CD4-positive, alpha-beta memory T cell (primary cell): ENCODE measurements at regions of chr10 and their contacts with region 1.

Region 1: DNA sequence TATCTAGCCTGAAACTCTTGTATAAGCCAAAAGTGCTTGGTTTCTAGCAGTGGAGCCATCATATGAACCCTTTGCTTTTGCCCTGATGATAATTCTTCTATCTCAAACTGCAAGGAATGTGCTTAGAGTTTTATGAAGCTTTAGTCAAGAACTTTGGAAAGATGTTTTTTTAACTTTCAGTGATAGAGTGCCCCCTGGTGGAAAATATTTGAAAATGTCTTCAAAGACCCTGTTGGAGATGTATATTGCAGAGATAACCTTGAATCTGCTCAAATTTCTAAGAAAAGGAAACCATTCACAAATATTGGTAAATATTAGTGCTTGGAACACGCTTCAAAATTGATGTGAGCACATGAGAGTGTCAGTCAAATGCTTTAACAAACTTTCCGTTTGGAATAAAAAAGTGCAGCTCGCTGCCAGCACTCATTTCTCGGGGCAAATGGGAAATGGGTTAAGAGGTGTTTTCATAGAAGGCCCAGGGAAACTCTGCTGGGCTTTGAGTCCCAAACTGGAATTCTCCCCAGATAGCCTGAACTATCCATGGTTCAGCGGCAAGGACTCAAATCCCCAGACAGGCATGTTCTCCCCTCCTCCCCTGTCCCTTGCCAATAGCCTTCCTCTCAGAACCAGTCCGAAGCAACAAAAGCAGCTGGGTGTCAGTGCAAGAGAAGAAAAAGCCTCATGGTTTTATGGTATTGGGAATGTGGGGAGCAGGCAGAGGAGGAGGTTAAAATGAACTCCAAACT is 129.3 kb downstream of the MYOF start:
- DNase-seq: peak in 4 of 5 donors; percentile 43 to 46 (median 45)
- H3K4me3 ChIP-seq: no peak overlapping the region
- H3K4me3 Mint-ChIP-seq: no peak overlapping the region
- H3K27ac ChIP-seq: no peak overlapping the region
- H3K27ac Mint-ChIP-seq: no peak overlapping the region
- H3K4me1 ChIP-seq: no peaks in the 10 kb centered on the region
- H3K4me1 Mint-ChIP-seq: peaks cover 0 to 3% (median 0%) of the 10 kb centered on the region in 4 donors
- H3K27me3 ChIP-seq: no peaks in the 10 kb centered on the region
- H3K27me3 Mint-ChIP-seq: peaks cover 7 to 10% of the 10 kb centered on the region in 2 donors

Region 2: DNA sequence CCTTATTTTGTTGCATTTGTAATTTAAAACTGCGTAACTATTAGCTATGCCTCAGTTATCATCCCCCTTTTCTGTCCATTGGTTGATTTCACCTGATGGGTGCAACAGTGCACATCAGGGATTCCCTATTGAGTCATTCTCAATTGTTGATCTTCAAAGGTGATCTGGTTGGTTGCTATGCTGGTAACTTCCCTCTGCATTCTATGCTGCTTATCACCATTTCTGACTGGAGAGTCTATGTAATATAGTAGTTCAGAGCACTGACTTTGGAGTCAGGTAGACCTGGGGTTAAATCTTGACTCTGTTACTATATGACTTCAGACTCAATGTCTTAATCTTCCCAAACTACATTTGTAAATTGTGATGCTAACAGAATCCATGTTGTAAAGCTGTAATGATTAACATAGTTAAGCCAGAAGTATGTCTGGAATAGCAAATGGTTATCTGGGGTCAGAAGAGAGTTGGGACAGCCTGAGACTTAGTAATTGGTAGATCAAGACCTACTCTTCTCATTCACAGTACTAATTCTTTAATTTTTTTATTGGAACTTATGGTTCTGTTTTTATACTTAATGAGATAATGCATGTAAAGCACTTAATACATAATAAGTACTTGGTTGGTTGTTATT is 466.4 kb before region 1 on chr10:
- CTCF ChIA-PET with region 1: interaction called, 11 read pairs
- POLR2A ChIA-PET with region 1: no interaction called
- intact Hi-C with region 1: loop called (anchors 1 kb)
- DNase-seq: no peak
- H3K4me3 ChIP-seq: no peak overlapping the region
- H3K4me3 Mint-ChIP-seq: no peak overlapping the region
- H3K27ac ChIP-seq: no peak overlapping the region
- H3K27ac Mint-ChIP-seq: peak overlapping the region in 1 of 7 donors; percentile 81
- H3K4me1 ChIP-seq: no peaks in the 10 kb centered on the region
- H3K4me1 Mint-ChIP-seq: peaks cover 0 to 9% (median 7%) of the 10 kb centered on the region in 4 donors
- H3K27me3 ChIP-seq: no peaks in the 10 kb centered on the region
- H3K27me3 Mint-ChIP-seq: no peaks in the 10 kb centered on the region

Region 3: GRCh38 chr10:92965314-92965713 is 387.5 kb before region 1 on chr10:
- CTCF ChIA-PET with region 1: interaction called, 9 read pairs
- POLR2A ChIA-PET with region 1: no interaction called
- intact Hi-C with region 1: loop called (anchors 1 kb)
- DNase-seq: peak in 4 of 5 donors; percentile 14 to 26 (median 18)
- H3K4me3 ChIP-seq: no peak overlapping the region
- H3K4me3 Mint-ChIP-seq: no peak overlapping the region
- H3K27ac ChIP-seq: no peak overlapping the region
- H3K27ac Mint-ChIP-seq: no peak overlapping the region
- H3K4me1 ChIP-seq: no peaks in the 10 kb centered on the region
- H3K4me1 Mint-ChIP-seq: no peaks in the 10 kb centered on the region
- H3K27me3 ChIP-seq: no peaks in the 10 kb centered on the region
- H3K27me3 Mint-ChIP-seq: no peaks in the 10 kb centered on the region

Region 4: GRCh38 chr10:93080350-93081046 is 272.3 kb before region 1 on chr10:
- CTCF ChIA-PET with region 1: interaction called, 38 read pairs
- POLR2A ChIA-PET with region 1: no interaction called
- intact Hi-C with region 1: loop called (anchors 1 kb)
- DNase-seq: peak in 4 of 5 donors; percentile 43 to 47 (median 46)
- H3K4me3 ChIP-seq: no peak overlapping the region
- H3K4me3 Mint-ChIP-seq: peak overlapping the region in 4 of 8 donors; percentile 33 to 71 (median 62)
- H3K27ac ChIP-seq: no peak overlapping the region
- H3K27ac Mint-ChIP-seq: no peak overlapping the region
- H3K4me1 ChIP-seq: peaks cover 4% of the 10 kb centered on the region
- H3K4me1 Mint-ChIP-seq: peaks cover 2 to 10% (median 7%) of the 10 kb centered on the region in 4 donors
- H3K27me3 ChIP-seq: no peaks in the 10 kb centered on the region
- H3K27me3 Mint-ChIP-seq: peaks cover 17 to 39% of the 10 kb centered on the region in 2 donors

Region 5: DNA sequence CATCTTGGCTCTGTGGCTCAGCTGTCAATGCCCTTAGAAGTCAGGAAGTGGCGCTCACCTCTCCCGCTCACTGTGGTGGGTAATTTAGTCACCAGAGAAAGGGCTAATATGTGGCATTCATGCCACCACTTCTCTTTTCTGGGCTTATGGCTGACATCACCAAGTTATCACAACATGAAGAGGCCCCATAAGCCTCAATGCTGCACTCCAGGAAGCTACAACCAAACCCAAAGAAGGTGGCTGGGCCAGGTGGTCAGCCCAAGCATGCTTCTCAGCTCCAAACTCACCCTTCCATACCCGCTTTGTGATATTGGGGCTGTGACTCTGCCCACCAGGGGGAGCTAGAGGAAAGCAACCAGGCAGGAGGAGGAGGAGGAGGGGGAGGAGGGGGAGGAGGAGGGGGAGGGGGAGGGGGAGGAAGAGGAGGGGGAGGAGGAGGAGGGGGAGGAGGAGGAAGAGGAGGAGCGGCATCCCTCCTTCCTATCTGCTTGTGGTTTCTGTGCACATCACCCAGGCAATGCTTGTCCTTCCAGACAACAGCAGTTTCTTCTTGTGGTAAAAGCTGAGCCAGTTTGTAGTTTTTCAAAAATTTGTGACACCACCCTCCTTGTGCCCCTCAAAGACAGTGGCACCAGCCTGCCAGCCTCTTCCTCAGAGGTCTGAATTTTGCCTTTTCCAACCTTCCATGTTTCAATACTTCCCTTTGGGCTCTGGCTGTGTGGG is 237.0 kb before region 1 on chr10:
- CTCF ChIA-PET with region 1: interaction called, 35 read pairs
- POLR2A ChIA-PET with region 1: interaction called, 4 read pairs
- intact Hi-C with region 1: loop called (anchors 1 kb)
- DNase-seq: peak; percentile 64 to 75 (median 66)
- H3K4me3 ChIP-seq: no peak overlapping the region
- H3K4me3 Mint-ChIP-seq: peak overlapping the region in 3 of 8 donors; percentile 24 to 56 (median 34)
- H3K27ac ChIP-seq: no peak overlapping the region
- H3K27ac Mint-ChIP-seq: peak overlapping the region in 6 of 7 donors; percentile 29 to 80 (median 74)
- H3K4me1 ChIP-seq: peaks cover 14% of the 10 kb centered on the region
- H3K4me1 Mint-ChIP-seq: peaks cover 12 to 28% (median 17%) of the 10 kb centered on the region in 4 donors
- H3K27me3 ChIP-seq: no peaks in the 10 kb centered on the region
- H3K27me3 Mint-ChIP-seq: peaks cover 0 to 9% of the 10 kb centered on the region in 2 donors

Region 6: GRCh38 chr10:93363891-93364648 is 11.3 kb after region 1 on chr10:
- CTCF ChIA-PET with region 1: interaction called, 15 read pairs
- POLR2A ChIA-PET with region 1: no interaction called
- intact Hi-C with region 1: no loop called
- DNase-seq: no peak
- H3K4me3 ChIP-seq: no peak overlapping the region
- H3K4me3 Mint-ChIP-seq: no peak overlapping the region
- H3K27ac ChIP-seq: no peak overlapping the region
- H3K27ac Mint-ChIP-seq: peak overlapping the region in 1 of 7 donors; percentile 20
- H3K4me1 ChIP-seq: no peaks in the 10 kb centered on the region
- H3K4me1 Mint-ChIP-seq: peaks cover 2 to 6% (median 3%) of the 10 kb centered on the region in 4 donors
- H3K27me3 ChIP-seq: no peaks in the 10 kb centered on the region
- H3K27me3 Mint-ChIP-seq: peaks cover 0 to 2% of the 10 kb centered on the region in 2 donors

Region 7: DNA sequence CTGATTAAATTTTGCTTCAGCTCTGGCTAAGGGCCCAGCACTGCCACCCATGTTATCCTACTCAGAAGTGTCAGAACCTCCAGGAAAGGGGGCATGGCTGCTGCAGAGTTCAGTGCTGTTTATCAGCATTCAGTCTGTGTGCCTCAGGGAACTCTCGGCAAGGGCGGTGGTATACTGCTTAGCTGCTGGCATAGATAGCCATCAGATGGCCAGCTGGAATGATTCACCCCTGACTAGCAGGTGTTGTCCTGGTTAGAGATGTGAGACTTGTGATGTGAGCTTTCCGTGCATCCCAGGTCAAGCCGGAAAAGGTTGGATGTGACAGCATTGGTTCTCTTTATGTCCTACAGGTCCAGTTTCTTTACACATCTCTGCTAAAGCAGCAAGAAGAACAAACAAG is 165.7 kb after region 1 on chr10:
- CTCF ChIA-PET with region 1: no interaction called
- POLR2A ChIA-PET with region 1: no interaction called
- intact Hi-C with region 1: no loop called
- DNase-seq: no peak
- H3K4me3 ChIP-seq: no peak overlapping the region
- H3K4me3 Mint-ChIP-seq: no peak overlapping the region
- H3K27ac ChIP-seq: no peak overlapping the region
- H3K27ac Mint-ChIP-seq: no peak overlapping the region
- H3K4me1 ChIP-seq: no peaks in the 10 kb centered on the region
- H3K4me1 Mint-ChIP-seq: no peaks in the 10 kb centered on the region
- H3K27me3 ChIP-seq: no peaks in the 10 kb centered on the region
- H3K27me3 Mint-ChIP-seq: peaks cover 0 to 1% of the 10 kb centered on the region in 2 donors